Vagina (tissue), 2 donors: ENCODE measurements at regions of chr16 and their contacts with region 1.

Region 1: DNA sequence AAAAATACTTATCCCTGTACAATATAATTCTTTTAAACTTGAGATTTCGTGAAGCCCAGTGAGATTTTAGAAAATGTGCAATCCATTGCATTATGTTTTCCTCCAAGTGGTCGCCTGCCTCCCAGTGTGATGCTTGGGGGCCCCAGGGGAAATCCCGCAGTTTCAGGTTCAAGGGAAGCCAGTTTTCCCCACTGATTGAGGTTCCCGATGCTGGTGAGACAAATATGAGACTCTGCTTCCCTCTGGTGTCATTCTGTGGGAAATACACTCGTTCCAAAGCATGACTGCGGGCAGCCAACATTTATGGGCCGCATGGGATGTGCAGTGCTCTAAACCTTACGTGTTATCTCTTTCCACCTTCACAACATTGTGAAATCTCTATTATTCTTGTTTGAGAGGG is 200.8 kb downstream of the PRKCB start:
- DNase-seq: no peak
- H3K4me3 ChIP-seq: no peak overlapping the region
- H3K27ac ChIP-seq: no peak overlapping the region
- H3K4me1 ChIP-seq: no peaks in the 10 kb centered on the region
- H3K27me3 ChIP-seq: no peaks in the 10 kb centered on the region
- CTCF ChIP-seq: peak; percentile 32 to 47 (median 44)
- POLR2A ChIP-seq: no peak

Region 2: DNA sequence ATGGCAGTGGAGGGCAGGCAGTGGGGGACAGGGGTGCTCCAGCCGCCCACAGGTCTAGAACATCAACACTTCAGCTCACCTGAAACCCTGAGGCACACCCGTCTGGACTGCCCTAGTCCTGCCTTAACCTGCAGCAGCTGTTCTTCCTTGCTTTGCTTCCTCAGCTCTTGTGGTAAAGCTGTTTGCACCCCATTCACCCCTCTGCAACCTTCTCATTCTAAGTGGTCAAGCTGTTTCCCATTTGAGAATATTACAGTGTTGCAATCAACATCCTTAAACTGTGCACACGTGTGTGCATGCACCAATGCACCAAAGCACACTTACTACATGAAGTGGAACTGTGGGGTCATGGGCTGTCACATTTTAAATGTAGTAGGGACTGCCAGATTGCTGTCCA is 702.2 kb before region 1 on chr16:
- intact Hi-C with region 1: no loop called
- DNase-seq: no peak
- H3K4me3 ChIP-seq: no peak overlapping the region
- H3K27ac ChIP-seq: no peak overlapping the region
- H3K4me1 ChIP-seq: peaks cover 5% of the 10 kb centered on the region
- H3K27me3 ChIP-seq: no peaks in the 10 kb centered on the region
- CTCF ChIP-seq: no peak
- POLR2A ChIP-seq: no peak

Region 3: DNA sequence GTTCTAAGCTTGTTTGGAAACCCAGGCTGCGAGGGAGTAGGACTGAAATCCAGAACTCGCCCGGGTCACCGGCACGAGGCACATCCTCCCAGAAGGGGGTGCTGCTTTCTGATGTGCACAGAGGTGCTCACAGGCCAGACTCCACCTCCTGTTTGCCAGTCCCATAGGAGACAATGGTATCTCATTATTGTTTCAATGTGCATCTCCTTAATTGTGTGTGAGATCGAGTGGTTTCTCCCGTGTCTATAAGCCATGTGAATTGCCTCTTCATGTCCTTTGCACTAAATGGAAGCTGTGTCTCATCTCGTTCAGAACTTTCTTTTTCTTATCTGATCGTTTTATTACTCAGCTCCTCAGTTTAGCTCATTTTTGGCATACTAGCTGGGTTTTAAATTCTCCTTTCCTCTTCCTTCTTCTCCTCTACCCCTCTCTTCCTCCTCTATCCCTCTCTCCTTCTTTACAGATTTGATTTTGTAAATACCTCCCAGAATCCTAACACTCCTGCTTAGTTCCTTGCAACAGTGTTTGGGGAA is 233.0 kb before region 1 on chr16:
- intact Hi-C with region 1: loop called (anchors 5 kb)
- DNase-seq: no peak
- H3K4me3 ChIP-seq: peak overlapping the region in 1 of 2 donors; percentile 7
- H3K27ac ChIP-seq: no peak overlapping the region
- H3K4me1 ChIP-seq: no peaks in the 10 kb centered on the region
- H3K27me3 ChIP-seq: no peaks in the 10 kb centered on the region
- CTCF ChIP-seq: peak in 2 of 3 experiments; percentile 17 to 28
- POLR2A ChIP-seq: no peak

Region 4: GRCh38 chr16:23930791-23931190 is 105.8 kb before region 1 on chr16:
- intact Hi-C with region 1: no loop called
- DNase-seq: no peak
- H3K4me3 ChIP-seq: no peak overlapping the region
- H3K27ac ChIP-seq: no peak overlapping the region
- H3K4me1 ChIP-seq: no peaks in the 10 kb centered on the region
- H3K27me3 ChIP-seq: no peaks in the 10 kb centered on the region
- CTCF ChIP-seq: no peak
- POLR2A ChIP-seq: no peak

Region 5: GRCh38 chr16:23941025-23941424 is 95.6 kb before region 1 on chr16:
- intact Hi-C with region 1: no loop called
- DNase-seq: no peak
- H3K4me3 ChIP-seq: no peak overlapping the region
- H3K27ac ChIP-seq: no peak overlapping the region
- H3K4me1 ChIP-seq: peaks cover 6% of the 10 kb centered on the region
- H3K27me3 ChIP-seq: no peaks in the 10 kb centered on the region
- CTCF ChIP-seq: no peak
- POLR2A ChIP-seq: no peak

Region 6: DNA sequence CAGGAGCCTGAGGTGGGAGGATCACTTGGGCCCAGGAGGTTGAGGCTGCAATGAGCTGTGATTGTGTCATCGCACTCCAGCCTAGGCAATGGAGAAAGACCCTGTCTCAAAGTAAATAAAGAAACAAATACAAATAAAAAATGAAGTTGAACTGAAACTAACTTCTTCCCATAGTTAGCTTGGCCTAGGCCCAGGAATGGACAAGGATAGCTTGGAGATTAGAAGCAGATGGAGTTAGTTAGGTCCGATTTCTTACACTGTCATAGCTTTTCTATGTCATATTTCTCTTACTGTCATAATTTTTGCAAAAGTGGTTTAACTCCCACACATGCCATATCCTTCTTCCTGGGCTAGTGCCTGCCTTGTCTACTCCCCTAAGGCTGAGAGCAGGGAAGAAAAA is 64.8 kb after region 1 on chr16:
- intact Hi-C with region 1: loop called (anchors 2 kb)
- DNase-seq: no peak
- H3K4me3 ChIP-seq: no peak overlapping the region
- H3K27ac ChIP-seq: no peak overlapping the region
- H3K4me1 ChIP-seq: peaks cover 5% of the 10 kb centered on the region
- H3K27me3 ChIP-seq: no peaks in the 10 kb centered on the region
- CTCF ChIP-seq: no peak
- POLR2A ChIP-seq: no peak